ENCODE measurements at regions of chr11 and their contacts with region 1.

Region 1: DNA sequence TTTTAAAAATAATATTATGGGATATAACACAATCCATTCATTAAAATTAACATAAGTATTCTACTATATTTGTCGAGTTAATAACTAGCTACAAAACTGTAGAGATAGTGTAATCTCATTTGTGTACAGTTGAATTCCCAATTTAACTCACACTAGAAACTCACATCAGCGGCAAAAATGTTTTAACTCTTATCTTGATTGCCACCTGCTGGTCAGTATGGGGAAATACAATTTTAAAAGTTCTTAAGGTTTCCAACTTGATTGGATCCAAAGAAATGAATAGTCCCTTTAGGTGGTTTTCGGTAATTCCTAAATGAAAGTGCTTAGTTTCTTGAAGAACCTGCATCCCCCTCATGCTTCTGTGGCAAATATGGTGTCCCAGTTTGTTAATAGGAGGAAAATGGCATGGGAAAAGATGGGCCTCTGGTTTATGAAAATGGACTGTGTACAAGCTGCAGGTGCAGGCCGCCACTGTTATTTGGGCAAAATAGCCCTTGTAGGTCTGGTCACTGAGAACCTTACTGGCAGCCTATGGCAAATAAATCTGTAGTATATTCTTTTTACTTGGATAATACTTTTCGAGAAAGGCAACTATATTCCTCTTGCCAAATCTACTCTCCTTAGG is 33.7 kb upstream of the SLC17A6 start:
- DNase-seq: no peak
- ATAC-seq: peak; percentile 30 to 50
- H3K4me3 ChIP-seq: no peak overlapping the region
- H3K27ac ChIP-seq: no peak overlapping the region
- H3K4me1 ChIP-seq: no peaks in the 10 kb centered on the region
- H3K27me3 ChIP-seq: no peaks in the 10 kb centered on the region
- CTCF ChIP-seq: peak; percentile 72

Region 2: GRCh38 chr11:22244986-22245592 is 59.4 kb before region 1 on chr11:
- intact Hi-C with region 1: loop called (anchors 10 kb)
- DNase-seq: peak; percentile 44
- ATAC-seq: peak; percentile 78 to 85
- H3K4me3 ChIP-seq: no peak overlapping the region
- H3K27ac ChIP-seq: no peak overlapping the region
- H3K4me1 ChIP-seq: no peaks in the 10 kb centered on the region
- H3K27me3 ChIP-seq: no peaks in the 10 kb centered on the region
- CTCF ChIP-seq: peak; percentile 63

Measured in lower lobe of right lung (tissue), 2 donors.